ENCODE measurements at regions of chrX and their contacts with region 1.

Region 1: GRCh38 chrX:107654872-107655761 is 26.8 kb downstream of the PRPS1 start:
- DNase-seq: peak; percentile 81
- H3K4me3 ChIP-seq: peak overlapping the region; percentile 15; the same call in 1 of the 2 replicates
- H3K27me3 ChIP-seq: no peaks in the 10 kb centered on the region
- CTCF ChIP-seq: peak; percentile 74

Region 2: DNA sequence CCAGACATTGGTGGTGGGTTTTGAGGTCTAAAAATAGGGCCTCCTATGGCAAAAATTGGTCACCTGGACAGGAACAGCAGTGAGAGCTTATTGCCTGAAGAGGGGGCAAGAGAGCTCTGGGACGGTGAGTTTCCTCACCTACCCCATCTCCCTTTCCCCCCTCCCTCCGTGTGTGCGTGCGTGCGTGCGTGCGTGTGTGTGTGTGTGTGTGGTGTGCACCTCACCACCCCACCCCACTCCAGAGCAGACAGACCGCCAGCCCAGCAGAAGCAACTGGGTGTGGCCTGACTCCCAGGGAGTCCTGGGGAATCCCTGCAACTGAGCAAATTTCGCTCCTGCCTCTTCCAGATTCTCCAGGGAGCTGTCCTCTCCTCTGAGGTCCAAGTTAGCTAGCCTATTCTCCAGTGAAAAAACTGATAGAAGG is 17.9 kb after region 1 on chrX:
- CTCF ChIA-PET with region 1: interaction called, 27 read pairs
- POLR2A ChIA-PET with region 1: no interaction called
- DNase-seq: peak; percentile 5
- H3K4me3 ChIP-seq: no peak overlapping the region
- H3K27me3 ChIP-seq: no peaks in the 10 kb centered on the region
- CTCF ChIP-seq: peak; percentile 65

Region 3: DNA sequence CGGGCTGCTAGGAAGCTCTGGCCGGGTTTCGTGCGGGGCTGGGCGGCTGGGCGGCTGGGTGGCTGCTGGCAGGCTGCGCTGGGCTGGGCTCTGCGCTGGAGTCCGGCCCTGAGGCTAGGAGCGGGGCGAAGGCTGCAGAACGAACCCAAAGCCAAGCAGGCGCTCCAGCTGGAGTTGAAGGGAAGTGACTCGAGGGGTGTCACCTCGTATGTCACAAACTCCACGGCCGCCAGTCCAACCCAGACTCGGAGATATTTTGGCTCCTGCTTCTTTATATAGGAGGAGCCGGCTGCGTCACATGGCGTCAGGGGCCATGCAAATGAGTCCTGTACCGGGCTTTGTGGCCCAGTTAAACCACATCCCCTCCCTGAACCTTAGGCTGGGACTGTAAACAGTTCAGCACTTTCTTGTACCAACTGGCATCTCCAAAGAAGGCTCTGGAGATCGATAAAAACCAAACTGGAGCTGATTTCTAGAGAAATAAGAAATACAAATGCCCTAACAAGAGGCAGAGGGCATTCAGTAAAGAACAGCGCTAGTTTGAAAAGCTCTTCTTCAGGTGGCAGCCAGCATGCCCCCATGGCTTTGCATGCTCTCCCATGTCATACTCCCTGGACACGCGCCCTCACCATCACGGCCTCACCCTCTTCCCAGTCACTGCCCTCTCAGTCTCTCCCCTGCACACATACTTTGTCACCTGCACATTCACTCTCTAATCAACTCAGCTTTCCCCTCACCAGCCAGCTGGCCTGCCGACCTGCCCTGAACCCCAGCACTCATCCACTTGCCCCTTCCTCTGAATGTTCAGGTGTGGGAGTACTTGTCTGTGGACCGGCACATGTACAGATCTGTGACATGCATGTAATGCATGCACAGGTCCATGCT is 61.9 kb after region 1 on chrX:
- CTCF ChIA-PET with region 1: interaction called, 33 read pairs
- POLR2A ChIA-PET with region 1: no interaction called
- DNase-seq: peak; percentile 45
- H3K4me3 ChIP-seq: peak overlapping the region; percentile 67
- H3K27me3 ChIP-seq: no peaks in the 10 kb centered on the region; the same call in 1 of the 2 replicates
- CTCF ChIP-seq: no peak

Region 4: DNA sequence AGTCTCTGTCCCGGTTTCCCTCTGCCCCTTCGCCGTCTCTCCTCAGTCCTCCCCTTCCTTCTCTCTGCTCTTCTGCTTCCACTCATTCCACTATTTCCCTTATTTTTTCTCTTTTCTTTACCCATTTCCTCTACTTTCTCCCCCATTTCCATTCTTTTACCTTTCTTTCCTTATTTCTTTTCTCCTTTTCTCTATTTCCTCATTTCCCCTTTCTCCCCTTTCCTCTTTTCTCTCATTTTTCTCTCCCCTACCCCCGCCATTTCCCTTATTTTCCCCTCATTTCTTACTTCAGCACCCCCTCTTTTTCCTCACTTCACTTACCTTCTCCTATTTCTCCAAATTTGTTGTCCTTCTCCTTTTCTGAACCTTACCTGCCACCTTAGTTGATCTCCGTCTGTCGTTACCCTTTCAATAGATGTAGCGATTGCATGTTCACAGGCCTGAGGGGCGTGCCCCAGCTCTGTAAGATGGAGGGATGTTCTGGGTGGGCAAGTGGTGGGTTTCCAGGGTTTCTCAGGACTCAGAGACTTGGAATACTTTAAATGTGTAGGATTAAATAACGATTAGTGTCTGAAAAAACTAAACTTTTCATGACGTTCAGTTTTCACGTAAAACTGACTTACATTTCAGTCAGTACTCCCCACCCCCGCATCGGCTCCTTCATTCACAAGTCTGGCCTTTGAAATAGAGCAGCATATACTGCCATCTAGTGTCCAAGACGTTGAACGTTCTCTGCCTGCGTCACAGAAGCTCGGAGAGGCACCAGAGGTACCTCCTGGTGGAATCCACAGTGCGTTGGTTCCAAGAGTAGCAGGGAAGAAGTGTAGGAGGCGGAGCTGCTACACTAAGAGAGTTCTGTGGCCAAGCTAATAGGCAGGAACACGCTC is 121.8 kb after region 1 on chrX:
- CTCF ChIA-PET with region 1: interaction called, 56 read pairs
- POLR2A ChIA-PET with region 1: no interaction called
- DNase-seq: peak; percentile 31
- H3K4me3 ChIP-seq: peak overlapping the region; percentile 42
- H3K27me3 ChIP-seq: peaks cover 4% of the 10 kb centered on the region; the same call in 1 of the 2 replicates
- CTCF ChIP-seq: peak; percentile 59

Measured in BJ (cell line).